Activated CD8-positive, alpha-beta T cell treated with anti-CD3 and anti-CD28 coated beads, Interleukin-2, amount 10 ng/mL, durations not matched to agents 7 days and 5 days (primary cell): ENCODE measurements at regions of chr17 and their contacts with region 1.

Region 1: GRCh38 chr17:63406689-63407330 is 39.3 kb downstream of the CYB561 start:
- DNase-seq: peak; percentile 84
- ATAC-seq: peak; percentile 93
- H3K4me3 Mint-ChIP-seq: no peak overlapping the region
- H3K27ac Mint-ChIP-seq: no peak overlapping the region
- H3K4me1 Mint-ChIP-seq: peaks cover 1% of the 10 kb centered on the region
- H3K27me3 Mint-ChIP-seq: no peaks in the 10 kb centered on the region

Region 2: DNA sequence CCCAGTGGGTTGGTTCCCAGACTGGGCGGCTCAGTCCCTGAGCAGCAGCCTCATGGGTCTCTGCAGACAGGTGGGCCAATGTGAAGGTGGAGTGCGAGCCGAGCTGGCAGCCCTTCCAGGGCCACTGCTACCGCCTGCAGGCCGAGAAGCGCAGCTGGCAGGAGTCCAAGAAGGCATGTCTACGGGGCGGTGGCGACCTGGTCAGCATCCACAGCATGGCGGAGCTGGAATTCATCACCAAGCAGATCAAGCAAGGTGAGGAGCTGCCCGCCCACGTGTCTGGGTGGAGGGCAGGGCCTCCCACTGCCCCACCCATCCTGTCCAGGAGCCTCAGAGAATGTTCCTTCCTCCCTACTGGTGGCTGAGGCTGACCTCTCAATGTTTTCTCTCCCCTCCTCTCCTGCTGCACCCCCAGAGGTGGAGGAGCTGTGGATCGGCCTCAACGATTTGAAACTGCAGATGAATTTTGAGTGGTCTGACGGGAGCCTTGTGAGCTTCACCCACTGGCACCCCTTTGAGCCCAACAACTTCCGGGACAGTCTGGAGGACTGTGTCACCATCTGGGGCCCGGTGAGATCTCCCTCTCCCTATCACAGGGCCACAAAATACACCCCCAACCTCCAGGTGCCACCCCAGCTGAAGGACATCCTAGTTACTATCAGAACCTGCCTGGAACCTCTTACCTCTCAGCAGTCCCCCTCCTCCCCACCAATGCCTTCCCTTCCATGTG is 735.1 kb before region 1 on chr17:
- CTCF ChIA-PET with region 1: interaction called, 20 read pairs
- POLR2A ChIA-PET with region 1: no interaction called
- DNase-seq: no peak
- ATAC-seq: no peak
- H3K4me3 Mint-ChIP-seq: no peak overlapping the region
- H3K27ac Mint-ChIP-seq: no peak overlapping the region
- H3K4me1 Mint-ChIP-seq: peaks cover 5% of the 10 kb centered on the region
- H3K27me3 Mint-ChIP-seq: no peaks in the 10 kb centered on the region

Region 3: GRCh38 chr17:62995377-62995885 is 411.4 kb before region 1 on chr17:
- CTCF ChIA-PET with region 1: interaction called, 43 read pairs
- POLR2A ChIA-PET with region 1: no interaction called
- DNase-seq: peak; percentile 44
- ATAC-seq: peak; percentile 51
- H3K4me3 Mint-ChIP-seq: no peak overlapping the region
- H3K27ac Mint-ChIP-seq: no peak overlapping the region
- H3K4me1 Mint-ChIP-seq: no peaks in the 10 kb centered on the region
- H3K27me3 Mint-ChIP-seq: no peaks in the 10 kb centered on the region

Region 4: DNA sequence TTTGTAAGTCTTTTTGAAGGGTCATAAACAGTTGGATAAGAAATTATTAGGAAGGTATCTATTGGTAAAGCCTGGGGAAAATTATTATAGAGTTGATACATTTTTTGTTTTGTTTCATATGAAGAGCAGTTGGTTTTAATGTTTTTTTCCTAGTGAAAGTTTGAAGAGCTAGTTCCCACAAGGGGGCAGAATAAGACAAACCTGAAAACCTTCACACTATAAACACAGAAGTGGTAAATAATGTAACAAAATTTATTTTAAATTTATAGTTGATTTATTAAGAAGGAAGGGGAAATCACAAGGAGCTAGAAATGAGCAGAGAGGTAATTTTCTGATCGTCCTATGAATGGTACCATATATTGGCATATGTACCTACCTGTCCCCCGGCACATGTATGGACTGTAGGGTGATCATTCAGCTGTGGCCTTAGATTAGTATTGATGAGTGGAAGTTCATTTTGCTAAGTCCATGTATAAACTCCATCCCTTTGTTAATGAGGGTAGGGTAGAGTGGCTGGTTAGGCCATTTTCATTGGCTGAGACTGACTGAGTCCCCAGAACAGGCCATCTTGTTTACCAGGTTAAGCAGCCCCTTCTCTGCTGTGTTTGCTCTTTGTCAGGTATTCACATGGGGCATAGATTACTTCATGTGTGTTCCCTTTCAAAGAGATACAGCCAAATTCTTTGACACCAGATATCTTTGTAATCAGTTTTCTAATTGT is 324.4 kb before region 1 on chr17:
- CTCF ChIA-PET with region 1: interaction called, 45 read pairs
- POLR2A ChIA-PET with region 1: no interaction called
- DNase-seq: no peak
- ATAC-seq: no peak
- H3K4me3 Mint-ChIP-seq: no peak overlapping the region
- H3K27ac Mint-ChIP-seq: no peak overlapping the region
- H3K4me1 Mint-ChIP-seq: no peaks in the 10 kb centered on the region
- H3K27me3 Mint-ChIP-seq: no peaks in the 10 kb centered on the region

Region 5: GRCh38 chr17:63381101-63381729 is 25.6 kb before region 1 on chr17:
- CTCF ChIA-PET with region 1: interaction called, 15 read pairs
- POLR2A ChIA-PET with region 1: no interaction called
- DNase-seq: no peak
- ATAC-seq: no peak
- H3K4me3 Mint-ChIP-seq: no peak overlapping the region
- H3K27ac Mint-ChIP-seq: no peak overlapping the region
- H3K4me1 Mint-ChIP-seq: no peaks in the 10 kb centered on the region
- H3K27me3 Mint-ChIP-seq: no peaks in the 10 kb centered on the region

Region 6: DNA sequence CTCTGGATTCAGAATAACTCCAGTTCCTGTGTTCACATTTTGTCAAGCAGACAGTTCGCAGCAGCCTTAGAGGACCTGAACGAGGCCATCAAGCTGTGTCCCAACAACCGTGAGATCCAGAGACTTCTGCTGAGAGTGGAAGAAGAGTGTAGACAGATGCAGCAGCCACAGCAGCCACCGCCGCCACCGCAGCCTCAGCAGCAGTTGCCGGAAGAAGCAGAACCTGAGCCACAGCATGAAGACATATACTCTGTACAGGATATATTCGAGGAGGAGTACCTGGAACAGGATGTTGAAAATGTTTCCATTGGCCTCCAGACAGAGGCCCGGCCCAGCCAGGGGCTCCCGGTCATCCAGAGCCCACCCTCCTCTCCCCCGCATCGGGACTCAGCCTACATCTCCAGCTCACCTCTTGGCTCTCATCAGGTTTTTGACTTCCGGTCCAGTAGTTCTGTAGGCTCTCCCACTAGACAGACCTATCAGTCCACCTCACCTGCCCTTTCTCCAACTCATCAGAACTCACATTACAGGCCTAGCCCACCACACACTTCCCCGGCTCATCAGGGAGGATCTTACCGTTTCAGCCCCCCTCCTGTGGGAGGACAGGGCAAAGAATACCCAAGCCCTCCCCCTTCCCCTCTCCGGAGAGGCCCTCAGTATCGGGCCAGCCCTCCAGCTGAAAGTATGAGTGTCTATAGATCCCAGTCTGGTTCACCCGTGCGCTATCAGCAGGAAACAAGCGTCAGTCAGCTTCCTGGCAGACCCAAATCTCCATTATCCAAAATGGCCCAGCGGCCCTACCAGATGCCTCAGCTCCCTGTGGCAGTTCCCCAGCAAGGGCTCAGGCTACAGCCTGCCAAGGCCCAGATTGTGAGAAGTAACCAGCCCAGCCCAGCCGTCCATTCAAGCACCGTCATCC is 13.4 kb after region 1 on chr17:
- CTCF ChIA-PET with region 1: interaction called, 70 read pairs
- POLR2A ChIA-PET with region 1: interaction called, 4 read pairs
- DNase-seq: peak; percentile 82
- ATAC-seq: peak; percentile 93
- H3K4me3 Mint-ChIP-seq: peak overlapping the region; percentile 5
- H3K27ac Mint-ChIP-seq: peak overlapping the region; percentile 85
- H3K4me1 Mint-ChIP-seq: peaks cover 28% of the 10 kb centered on the region
- H3K27me3 Mint-ChIP-seq: peaks cover 5% of the 10 kb centered on the region